ENCODE measurements at regions of chr17 and their contacts with region 1.

Region 1: DNA sequence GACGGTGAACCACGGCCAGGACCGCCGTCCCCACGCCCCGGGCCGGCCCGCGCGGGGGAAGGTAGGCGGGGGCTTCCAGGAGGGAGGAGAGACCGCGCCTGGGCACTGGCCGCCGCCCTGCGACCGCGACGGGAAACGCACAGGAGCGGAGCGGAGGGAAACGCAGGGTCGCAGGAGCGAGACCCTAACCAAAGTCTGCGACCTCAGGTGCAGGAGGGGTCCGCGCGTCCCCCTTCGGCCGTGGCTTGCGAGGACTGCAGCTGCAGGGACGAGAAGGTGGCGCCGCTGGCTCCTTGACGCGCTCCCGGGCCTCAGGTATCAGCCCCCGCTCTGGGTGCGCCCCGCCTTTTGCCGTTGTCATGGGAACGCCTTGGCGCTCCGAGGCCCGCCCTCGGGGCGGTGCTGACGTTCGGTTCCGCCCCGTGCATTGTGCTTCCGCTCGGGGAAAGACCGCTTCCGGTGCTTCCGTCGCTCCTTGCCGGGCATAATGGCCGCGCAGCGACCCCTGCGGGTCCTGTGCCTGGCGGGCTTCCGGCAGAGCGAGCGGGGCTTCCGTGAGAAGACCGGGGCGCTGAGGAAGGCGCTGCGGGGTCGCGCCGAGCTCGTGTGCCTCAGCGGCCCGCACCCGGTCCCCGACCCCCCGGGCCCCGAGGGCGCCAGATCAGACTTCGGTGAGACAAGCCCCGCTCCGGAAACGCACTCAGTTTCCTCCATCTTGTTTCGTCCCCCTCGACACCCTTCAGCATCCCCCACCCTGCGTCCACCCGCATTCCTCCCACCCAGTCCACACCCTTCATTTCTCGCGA is at the start of gene OVCA2:
- DNase-seq: peak; percentile 97
- H3K4me3 ChIP-seq: peak within 1 kb of the TSS; percentile 73
- H3K27ac ChIP-seq: peak within 1 kb of the TSS; percentile 91
- H3K4me1 ChIP-seq: peaks cover 13% of the 10 kb centered on the region
- H3K27me3 ChIP-seq: no peaks in the 10 kb centered on the region
- CTCF ChIP-seq: peak; percentile 60
- total RNA-seq, gene OVCA2: 30.7 and 33.1 TPM in 2 replicates

Region 2: DNA sequence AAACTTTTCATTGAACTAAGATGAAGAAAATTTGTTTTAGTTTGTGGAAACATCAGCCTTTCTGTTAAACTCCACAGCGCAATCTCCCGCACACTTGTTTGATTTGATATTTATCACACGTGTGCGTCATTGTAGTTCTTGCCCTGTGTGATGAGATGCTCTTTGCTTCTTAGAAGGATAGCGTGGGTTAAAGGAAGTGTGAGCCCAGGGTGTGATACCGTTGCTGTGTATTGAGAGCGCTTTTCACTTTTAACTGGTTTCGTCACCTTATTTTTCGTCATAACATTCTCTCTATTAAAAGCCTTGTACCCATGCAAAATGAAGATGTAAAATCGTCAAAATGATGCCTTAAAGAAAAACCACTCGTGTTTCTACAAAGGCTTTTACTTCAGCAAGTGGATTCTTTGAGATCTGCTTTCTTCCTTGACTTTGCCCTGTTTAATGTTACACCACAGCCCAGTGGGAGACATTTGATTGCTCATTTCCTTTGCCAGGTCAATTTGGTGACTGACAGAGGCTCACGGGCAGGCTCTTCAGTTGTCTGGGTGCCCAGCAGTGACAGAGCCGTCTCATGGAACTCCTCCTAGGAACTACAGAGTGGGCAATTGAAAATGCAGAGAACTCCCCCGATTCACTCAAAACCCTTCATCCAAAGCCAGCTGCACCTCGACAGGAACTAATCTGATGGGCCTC is 150.9 kb before region 1 on chr17:
- CTCF ChIA-PET with region 1: no interaction called
- POLR2A ChIA-PET with region 1: no interaction called
- intact Hi-C with region 1: no loop called
- DNase-seq: peak; percentile 52
- H3K4me3 ChIP-seq: no peak overlapping the region
- H3K27ac ChIP-seq: no peak overlapping the region
- H3K4me1 ChIP-seq: no peaks in the 10 kb centered on the region
- H3K27me3 ChIP-seq: no peaks in the 10 kb centered on the region
- CTCF ChIP-seq: no peak

Region 3: GRCh38 chr17:1908699-1909309 is 133.0 kb before region 1 on chr17:
- CTCF ChIA-PET with region 1: interaction called, 4 read pairs
- POLR2A ChIA-PET with region 1: no interaction called
- intact Hi-C with region 1: loop called (anchors 5 kb)
- DNase-seq: peak; percentile 90
- H3K4me3 ChIP-seq: peak overlapping the region; percentile 44
- H3K27ac ChIP-seq: no peak overlapping the region
- H3K4me1 ChIP-seq: peaks cover 13% of the 10 kb centered on the region
- H3K27me3 ChIP-seq: no peaks in the 10 kb centered on the region
- CTCF ChIP-seq: peak; percentile 82

Measured in A673 (cell line).